Tibial artery (tissue), 4 donors: ENCODE measurements at regions of chr3 and their contacts with region 1.

Region 1: DNA sequence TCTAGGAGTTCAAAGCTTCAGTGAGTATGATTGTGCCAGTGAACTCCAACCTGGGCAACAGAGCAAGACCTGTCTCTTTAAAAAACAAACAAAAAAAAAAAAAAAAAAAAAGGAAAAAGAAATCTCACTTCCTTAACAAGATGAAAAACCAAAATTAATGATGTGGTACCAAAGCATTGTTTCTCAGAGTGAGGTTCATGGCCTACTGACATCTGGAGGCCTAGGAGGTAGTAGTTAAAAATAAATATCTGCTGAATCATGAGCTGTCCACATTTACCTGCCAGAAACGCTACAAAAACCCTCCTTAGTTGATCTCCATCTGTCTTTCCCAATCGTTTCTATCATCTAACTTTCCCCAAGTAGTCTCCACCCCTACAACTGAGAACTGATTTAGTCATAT is 51.2 kb downstream of the EPHA6 start:
- DNase-seq: no peak
- H3K4me3 ChIP-seq: no peak overlapping the region
- H3K27ac ChIP-seq: no peak overlapping the region
- H3K4me1 ChIP-seq: no peaks in the 10 kb centered on the region
- H3K27me3 ChIP-seq: no peaks in the 10 kb centered on the region
- CTCF ChIP-seq: no peak

Region 2: GRCh38 chr3:96300743-96301142 is 564.9 kb before region 1 on chr3:
- intact Hi-C with region 1: no loop called
- DNase-seq: no peak
- H3K4me3 ChIP-seq: no peak overlapping the region
- H3K27ac ChIP-seq: no peak overlapping the region
- H3K4me1 ChIP-seq: no peaks in the 10 kb centered on the region
- H3K27me3 ChIP-seq: no peaks in the 10 kb centered on the region
- CTCF ChIP-seq: no peak

Region 3: GRCh38 chr3:96836153-96836915 is 29.3 kb before region 1 on chr3:
- intact Hi-C with region 1: no loop called
- DNase-seq: no peak
- H3K4me3 ChIP-seq: no peak overlapping the region
- H3K27ac ChIP-seq: no peak overlapping the region
- H3K4me1 ChIP-seq: no peaks in the 10 kb centered on the region
- H3K27me3 ChIP-seq: no peaks in the 10 kb centered on the region
- CTCF ChIP-seq: no peak

Region 4: DNA sequence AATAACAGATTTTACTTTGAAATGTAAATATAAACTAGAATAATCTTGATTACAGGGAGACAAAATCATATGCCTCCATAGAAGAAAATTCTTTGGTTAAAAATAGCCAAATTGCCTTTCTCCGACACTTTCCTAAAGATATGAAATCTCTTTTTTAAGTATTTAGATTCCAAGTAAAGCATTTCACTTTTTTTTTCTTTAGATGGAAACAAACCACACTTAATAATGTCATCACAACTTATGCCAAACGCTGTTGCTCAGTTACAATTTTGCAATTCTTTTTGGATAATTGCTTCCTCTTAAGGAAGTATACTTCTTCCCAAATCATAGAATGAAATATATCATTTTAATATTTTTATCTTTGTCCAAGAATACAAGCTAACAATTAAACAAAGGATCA is 604.9 kb after region 1 on chr3:
- intact Hi-C with region 1: loop called (anchors 5 kb)
- DNase-seq: no peak
- H3K4me3 ChIP-seq: no peak overlapping the region
- H3K27ac ChIP-seq: no peak overlapping the region
- H3K4me1 ChIP-seq: peaks cover 0 to 14% (median 6%) of the 10 kb centered on the region in 4 donors
- H3K27me3 ChIP-seq: no peaks in the 10 kb centered on the region
- CTCF ChIP-seq: no peak